WTC11 (cell line): ENCODE measurements at regions of chr1 and their contacts with region 1.

Region 1: GRCh38 chr1:113949007-113949406 is 19.9 kb downstream of the HIPK1 start:
- DNase-seq: no peak
- ATAC-seq: no peak
- H3K4me3 Mint-ChIP-seq: no peak overlapping the region
- H3K27ac Mint-ChIP-seq: no peak overlapping the region
- H3K4me1 Mint-ChIP-seq: peaks cover 28% of the 10 kb centered on the region
- H3K27me3 Mint-ChIP-seq: no peaks in the 10 kb centered on the region
- CTCF ChIP-seq: no peak

Region 2: GRCh38 chr1:113938192-113938591 is 10.8 kb before region 1 on chr1:
- CTCF ChIA-PET with region 1: interaction called, 11 read pairs
- POLR2A ChIA-PET with region 1: no interaction called
- DNase-seq: no peak
- ATAC-seq: no peak
- H3K4me3 Mint-ChIP-seq: no peak overlapping the region
- H3K27ac Mint-ChIP-seq: peak overlapping the region; percentile 72
- H3K4me1 Mint-ChIP-seq: peaks cover 23% of the 10 kb centered on the region
- H3K27me3 Mint-ChIP-seq: no peaks in the 10 kb centered on the region
- CTCF ChIP-seq: no peak

Region 3: GRCh38 chr1:113963281-113963906 is 14.4 kb after region 1 on chr1:
- CTCF ChIA-PET with region 1: interaction called, 10 read pairs
- POLR2A ChIA-PET with region 1: no interaction called
- DNase-seq: no peak
- ATAC-seq: no peak
- H3K4me3 Mint-ChIP-seq: no peak overlapping the region
- H3K27ac Mint-ChIP-seq: no peak overlapping the region
- H3K4me1 Mint-ChIP-seq: peaks cover 12% of the 10 kb centered on the region
- H3K27me3 Mint-ChIP-seq: no peaks in the 10 kb centered on the region
- CTCF ChIP-seq: no peak

Region 4: GRCh38 chr1:114015075-114015685 is 66.2 kb after region 1 on chr1:
- CTCF ChIA-PET with region 1: no interaction called
- POLR2A ChIA-PET with region 1: no interaction called
- DNase-seq: no peak
- ATAC-seq: no peak
- H3K4me3 Mint-ChIP-seq: no peak overlapping the region
- H3K27ac Mint-ChIP-seq: 0 out of 2 replicates have a peak overlapping the region, but pooled peaks have one; percentile 22
- H3K4me1 Mint-ChIP-seq: peaks cover 8% of the 10 kb centered on the region
- H3K27me3 Mint-ChIP-seq: no peaks in the 10 kb centered on the region; the same call in 1 of the 2 replicates
- CTCF ChIP-seq: no peak